ENCODE measurements at regions of chr5 and their contacts with region 1.

Region 1: DNA sequence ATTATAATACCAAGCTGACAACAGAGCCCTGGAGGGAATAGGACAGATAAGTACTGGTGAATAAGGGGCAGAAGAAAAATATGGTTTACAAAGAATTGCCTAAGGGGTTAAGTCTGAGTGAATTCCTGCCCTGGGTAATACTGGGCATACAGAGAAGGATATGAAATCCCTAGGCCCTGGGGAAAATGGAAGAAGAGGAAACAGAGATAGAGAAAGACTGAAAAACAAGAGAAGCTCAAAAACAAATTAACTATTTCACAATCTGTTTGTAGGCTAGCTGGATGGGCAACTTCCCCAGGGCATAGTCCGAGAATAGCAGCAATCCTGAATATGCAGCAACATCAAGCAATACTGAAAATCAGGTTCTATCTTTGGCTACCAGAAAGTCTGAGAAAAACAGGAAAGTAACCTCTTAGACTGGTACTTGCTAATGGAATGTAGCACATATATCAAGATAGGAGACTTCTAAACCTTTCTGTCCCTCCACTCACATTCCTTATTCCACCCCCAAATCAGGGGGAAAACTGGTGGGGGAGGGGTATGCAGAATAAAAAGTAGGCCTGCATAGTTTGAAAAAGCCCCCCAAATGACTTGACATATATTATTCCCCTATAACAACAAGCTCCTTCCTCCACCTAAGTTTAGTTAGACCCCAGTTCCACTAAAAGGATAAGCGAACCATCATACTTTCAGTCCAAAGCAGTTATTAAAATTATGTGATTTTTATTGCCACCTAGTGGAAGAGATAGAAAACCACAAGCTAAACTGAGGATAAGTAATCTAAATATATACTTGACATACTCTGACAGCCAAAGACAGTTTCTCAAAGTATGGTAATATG is 20.6 kb downstream of the SLC38A9 start:
- DNase-seq: no peak
- ATAC-seq: peak; percentile 85

Region 2: GRCh38 chr5:55344392-55344992 is 347.0 kb before region 1 on chr5:
- intact Hi-C with region 1: loop called (anchors 1 kb)
- DNase-seq: peak; percentile 35
- ATAC-seq: no peak

Region 3: DNA sequence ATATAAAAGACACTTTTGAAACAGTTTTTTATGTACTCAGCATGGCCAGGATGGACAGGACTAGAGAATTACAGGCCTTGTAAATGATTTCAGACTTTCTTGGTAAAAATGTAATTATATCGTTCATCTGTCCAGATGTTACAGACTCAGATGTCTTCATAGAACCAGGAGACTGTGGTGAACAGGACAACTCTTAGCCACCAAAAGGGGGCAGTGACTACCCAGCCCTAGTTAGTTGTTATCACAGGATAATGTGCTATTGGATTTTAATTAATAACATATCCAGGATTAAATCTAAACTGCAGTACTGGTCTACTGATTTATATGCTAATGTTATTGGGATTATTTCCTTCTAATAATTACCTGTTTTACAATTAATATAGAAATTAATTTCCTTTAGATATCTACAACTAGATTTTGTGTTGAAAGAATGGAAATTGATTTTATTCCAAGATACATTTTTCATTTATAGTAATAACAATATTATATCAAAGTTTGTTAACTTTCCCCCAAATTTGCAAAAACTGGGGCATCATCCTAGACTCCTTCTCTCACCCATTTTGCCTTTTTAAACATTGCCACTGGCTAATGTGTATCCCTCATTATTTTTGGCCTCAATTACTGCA is 284.3 kb before region 1 on chr5:
- intact Hi-C with region 1: loop called (anchors 5 kb)
- DNase-seq: no peak
- ATAC-seq: peak; percentile 83

Region 4: DNA sequence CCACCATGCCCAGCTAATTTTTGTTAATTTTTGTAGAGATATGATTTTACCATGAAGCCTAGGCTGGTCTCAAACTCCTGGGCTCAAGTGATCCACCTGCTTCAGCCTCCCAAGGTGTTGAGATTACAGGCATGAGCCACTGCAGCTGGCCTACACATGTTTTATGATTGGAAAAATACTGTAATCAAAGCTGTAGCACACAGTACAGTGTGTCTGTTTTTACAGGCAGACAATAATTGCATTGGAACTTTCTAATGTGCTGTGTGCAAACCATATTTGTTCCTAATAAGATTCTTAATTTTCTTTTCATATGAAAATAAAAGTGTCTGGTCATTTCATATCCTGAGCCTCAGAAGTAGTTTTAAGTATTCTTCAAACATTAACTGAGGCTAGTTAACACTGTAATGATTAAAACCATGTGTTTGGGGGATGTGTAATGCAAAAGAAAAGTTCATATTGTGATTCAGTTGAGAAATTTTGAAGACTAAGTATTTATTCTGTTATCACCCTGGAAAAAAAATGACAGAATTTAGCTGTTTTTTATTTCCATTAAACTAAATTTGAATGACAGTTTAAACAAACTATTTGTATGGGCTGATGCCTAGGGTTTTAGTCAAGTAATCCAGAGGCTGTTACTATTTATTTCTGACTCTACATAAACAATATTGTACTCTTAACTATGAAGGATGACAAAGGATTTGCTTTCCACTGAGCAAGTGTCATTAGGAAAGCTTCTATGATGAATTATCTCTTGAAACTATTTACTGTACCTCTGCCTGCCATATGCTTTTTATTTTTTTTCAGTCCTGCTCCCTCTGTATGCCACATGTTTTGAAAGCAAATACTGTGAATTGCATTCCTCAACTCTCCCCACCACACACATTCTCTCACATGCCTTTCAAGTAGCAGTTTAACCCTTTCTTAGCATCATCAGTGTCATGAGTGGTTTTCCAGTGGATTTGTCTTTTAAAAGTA is 272.2 kb before region 1 on chr5:
- intact Hi-C with region 1: loop called (anchors 5 kb)
- DNase-seq: no peak
- ATAC-seq: peak; percentile 17